CD4-positive, alpha-beta T cell (primary cell): ENCODE measurements at regions of chr9 and their contacts with region 1.

Region 1: GRCh38 chr9:131656356-131657036 is 83.4 kb downstream of the RAPGEF1 start:
- DNase-seq: peak; percentile 58 to 92 (median 74)
- ATAC-seq: peak; percentile 81
- H3K4me3 ChIP-seq: no peak overlapping the region
- H3K4me3 Mint-ChIP-seq: peak overlapping the region; percentile 32
- H3K27ac ChIP-seq: peak overlapping the region; percentile 71 to 76
- H3K27ac Mint-ChIP-seq: peak overlapping the region; percentile 94
- H3K4me1 ChIP-seq: peaks cover 69% of the 10 kb centered on the region
- H3K4me1 Mint-ChIP-seq: peaks cover 73% of the 10 kb centered on the region
- H3K27me3 ChIP-seq: no peaks in the 10 kb centered on the region
- H3K27me3 Mint-ChIP-seq: no peaks in the 10 kb centered on the region
- CTCF ChIP-seq: no peak

Region 2: GRCh38 chr9:131627648-131628458 is 28.6 kb before region 1 on chr9:
- CTCF ChIA-PET with region 1: interaction called, 3 read pairs
- POLR2A ChIA-PET with region 1: no interaction called
- intact Hi-C with region 1: loop called in 1 of 2 experiments (anchors 1 kb)
- DNase-seq: peak; percentile 12 to 92 (median 42)
- ATAC-seq: peak; percentile 86
- H3K4me3 ChIP-seq: no peak overlapping the region
- H3K4me3 Mint-ChIP-seq: peak overlapping the region; percentile 63
- H3K27ac ChIP-seq: peak overlapping the region; percentile 61 to 62
- H3K27ac Mint-ChIP-seq: peak overlapping the region; percentile 95
- H3K4me1 ChIP-seq: peaks cover 61% of the 10 kb centered on the region
- H3K4me1 Mint-ChIP-seq: peaks cover 38% of the 10 kb centered on the region
- H3K27me3 ChIP-seq: no peaks in the 10 kb centered on the region
- H3K27me3 Mint-ChIP-seq: no peaks in the 10 kb centered on the region
- CTCF ChIP-seq: no peak

Region 3: DNA sequence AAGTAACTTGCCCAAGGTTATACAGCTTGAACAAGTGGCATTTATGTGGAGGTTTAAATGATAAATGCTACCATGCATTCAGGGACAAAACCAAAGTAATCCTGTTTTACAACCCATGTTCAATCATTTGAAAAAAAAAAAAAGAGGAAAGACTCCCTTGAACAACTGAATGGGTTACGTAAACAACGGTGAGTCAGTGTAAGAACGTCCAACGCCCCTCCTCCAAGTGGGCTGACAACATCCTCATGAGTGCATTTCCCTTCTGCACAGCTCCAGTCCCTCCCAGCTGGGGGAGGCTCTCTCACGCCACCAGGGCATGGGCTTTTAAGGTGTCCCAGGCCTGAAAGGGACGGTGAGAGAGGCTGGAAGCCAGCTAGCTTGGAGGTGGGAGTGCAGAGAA is 21.2 kb before region 1 on chr9:
- CTCF ChIA-PET with region 1: interaction called, 5 read pairs
- POLR2A ChIA-PET with region 1: interaction called, 3 read pairs
- intact Hi-C with region 1: loop called in 1 of 2 experiments (anchors 1 kb)
- DNase-seq: peak; percentile 46 to 94 (median 74)
- ATAC-seq: peak; percentile 99
- H3K4me3 ChIP-seq: no peak overlapping the region
- H3K4me3 Mint-ChIP-seq: peak overlapping the region; percentile 54
- H3K27ac ChIP-seq: peak overlapping the region; percentile 62 to 81
- H3K27ac Mint-ChIP-seq: peak overlapping the region; percentile 98
- H3K4me1 ChIP-seq: peaks cover 20% of the 10 kb centered on the region
- H3K4me1 Mint-ChIP-seq: peaks cover 46% of the 10 kb centered on the region
- H3K27me3 ChIP-seq: no peaks in the 10 kb centered on the region
- H3K27me3 Mint-ChIP-seq: no peaks in the 10 kb centered on the region
- CTCF ChIP-seq: peak; percentile 13

Region 4: DNA sequence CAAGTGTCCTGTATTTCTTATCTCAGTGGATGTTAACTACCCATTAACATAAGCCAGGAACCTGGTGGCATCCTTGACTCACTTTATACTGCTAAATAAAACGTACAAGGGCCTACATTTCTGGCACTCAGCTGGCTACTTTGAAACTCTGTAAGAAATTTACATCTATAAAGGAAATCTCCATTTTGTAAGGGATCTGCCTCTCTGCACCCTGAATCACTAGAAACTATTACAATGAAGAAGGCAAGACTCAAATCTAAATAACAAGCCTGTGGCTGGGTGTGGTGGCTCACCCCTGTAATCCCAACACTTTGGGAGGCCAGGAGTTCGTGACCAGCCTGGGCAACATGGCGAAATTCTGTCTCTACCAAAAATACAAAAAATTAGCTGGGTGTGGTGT is 31.9 kb after region 1 on chr9:
- CTCF ChIA-PET with region 1: no interaction called
- POLR2A ChIA-PET with region 1: no interaction called
- intact Hi-C with region 1: no loop called
- DNase-seq: no peak
- ATAC-seq: no peak
- H3K4me3 ChIP-seq: no peak overlapping the region
- H3K4me3 Mint-ChIP-seq: no peak overlapping the region
- H3K27ac ChIP-seq: no peak overlapping the region
- H3K27ac Mint-ChIP-seq: no peak overlapping the region
- H3K4me1 ChIP-seq: peaks cover 29% of the 10 kb centered on the region
- H3K4me1 Mint-ChIP-seq: peaks cover 87% of the 10 kb centered on the region
- H3K27me3 ChIP-seq: no peaks in the 10 kb centered on the region
- H3K27me3 Mint-ChIP-seq: no peaks in the 10 kb centered on the region
- CTCF ChIP-seq: no peak